ENCODE measurements at regions of chr3 and their contacts with region 1.

Region 1: DNA sequence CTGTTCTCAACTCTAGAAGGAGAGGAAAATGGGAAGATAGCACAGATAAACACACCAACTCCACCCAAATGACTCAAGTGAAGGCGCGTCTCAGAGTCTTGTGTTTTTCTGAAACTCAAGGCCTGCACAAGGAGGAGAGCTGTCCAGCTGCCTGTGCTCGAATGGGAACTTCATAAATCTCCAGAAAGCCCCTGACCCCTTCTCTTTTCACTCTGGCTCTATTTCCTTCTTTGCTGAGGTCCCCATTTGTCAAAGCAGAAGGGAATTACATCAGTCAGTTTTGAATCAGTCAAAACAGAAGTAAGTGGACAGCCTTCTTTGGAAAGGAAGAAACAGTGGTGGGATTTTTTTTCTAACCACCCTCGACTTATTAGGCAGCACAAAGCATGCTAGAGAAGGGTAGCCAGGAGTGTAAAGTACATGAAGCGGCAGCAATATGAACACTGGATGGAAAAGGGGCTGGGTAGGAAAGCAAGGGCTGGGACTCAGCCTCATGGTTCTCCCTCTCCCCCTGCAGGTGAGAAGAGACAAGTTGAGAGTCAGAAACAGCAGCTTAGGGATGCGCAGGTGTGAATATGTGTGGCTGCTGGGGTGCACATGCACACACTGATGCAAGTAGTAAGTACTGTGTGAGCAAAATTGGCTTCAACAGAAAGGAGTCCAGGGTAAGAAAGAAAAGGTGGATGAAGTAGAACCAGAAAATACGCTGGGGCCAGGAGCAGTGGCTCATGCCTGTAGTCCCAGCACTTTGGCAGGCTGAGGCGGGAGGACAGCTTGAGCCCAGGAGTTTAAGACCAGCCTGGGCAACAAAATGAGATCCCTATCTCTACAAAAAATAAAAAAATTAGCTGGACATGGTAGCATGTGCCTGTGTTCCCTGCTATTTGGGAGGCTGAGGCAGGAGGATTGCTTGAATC is 36.6 kb upstream of the MAGEF1 start:
- DNase-seq: peak; percentile 41 to 55
- H3K4me3 ChIP-seq: no peak overlapping the region
- H3K27ac ChIP-seq: no peak overlapping the region
- H3K4me1 ChIP-seq: peaks cover 7% of the 10 kb centered on the region
- H3K27me3 ChIP-seq: no peaks in the 10 kb centered on the region
- CTCF ChIP-seq: peak; percentile 73

Region 2: GRCh38 chr3:184688251-184688881 is 60.1 kb before region 1 on chr3:
- CTCF ChIA-PET with region 1: no interaction called
- POLR2A ChIA-PET with region 1: interaction called, 11 read pairs
- intact Hi-C with region 1: no loop called
- DNase-seq: peak; percentile 41 to 73
- H3K4me3 ChIP-seq: no peak overlapping the region
- H3K27ac ChIP-seq: no peak overlapping the region
- H3K4me1 ChIP-seq: peaks cover 10% of the 10 kb centered on the region; the same call in 1 of the 2 replicates
- H3K27me3 ChIP-seq: peaks cover 9% of the 10 kb centered on the region; the same call in 1 of the 2 replicates
- CTCF ChIP-seq: no peak

Measured in PC-9 (cell line).